Activated CD4-positive, alpha-beta memory T cell treated with anti-CD3 and anti-CD28 coated beads for 36 hours (primary cell): ENCODE measurements at regions of chr9 and their contacts with region 1.

Region 1: GRCh38 chr9:133023117-133023890 is 7.5 kb upstream of the GTF3C5 start:
- DNase-seq: peak; percentile 71
- H3K4me3 Mint-ChIP-seq: peak overlapping the region; percentile 8
- H3K27ac Mint-ChIP-seq: no peak overlapping the region
- H3K4me1 Mint-ChIP-seq: peaks cover 12% of the 10 kb centered on the region
- H3K27me3 Mint-ChIP-seq: no peaks in the 10 kb centered on the region

Region 2: DNA sequence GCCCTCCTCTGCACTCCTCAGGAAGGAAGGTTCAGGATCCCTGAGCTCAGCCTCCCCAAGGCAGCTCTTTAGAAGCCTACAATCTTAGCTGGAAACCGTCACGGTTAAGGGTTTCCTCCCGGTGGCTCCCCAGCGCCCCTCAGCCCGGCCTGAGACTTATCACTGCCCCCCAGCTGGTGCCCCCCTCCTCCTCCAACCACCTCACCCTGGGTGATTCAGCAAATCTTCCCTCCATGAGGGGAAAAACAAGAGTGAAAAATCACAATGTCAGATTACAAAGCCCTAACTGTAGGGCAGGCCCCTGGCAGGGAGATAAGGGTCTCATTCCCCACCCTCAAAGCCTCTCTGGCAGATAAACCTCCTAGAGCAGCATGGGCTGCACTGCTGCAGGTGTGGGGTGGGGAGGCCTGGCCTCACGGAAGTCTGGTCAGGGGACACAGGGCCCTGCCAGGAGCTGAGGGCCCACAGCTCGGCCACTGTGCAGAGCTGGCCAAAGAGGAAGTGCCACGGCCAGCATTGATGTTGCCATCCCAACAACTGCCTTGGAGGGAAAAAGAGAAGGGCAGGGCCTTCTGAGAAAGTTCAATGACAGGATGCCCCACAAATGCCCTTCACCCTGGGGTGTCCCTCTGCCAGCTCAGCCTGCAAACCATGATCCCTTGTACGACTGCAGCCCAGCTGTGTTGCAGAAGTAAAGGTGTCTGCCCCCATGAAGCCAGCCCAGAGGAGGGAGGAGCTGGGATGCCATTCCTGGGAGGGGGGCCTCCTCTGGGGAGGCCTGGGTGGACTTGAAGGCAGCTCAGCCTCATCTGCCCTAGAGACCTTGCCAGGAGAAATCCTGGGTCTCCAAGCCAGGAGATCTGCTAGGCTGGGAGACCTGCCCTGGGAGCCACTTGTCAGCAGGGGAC is 19.0 kb before region 1 on chr9:
- CTCF ChIA-PET with region 1: interaction called, 10 read pairs
- POLR2A ChIA-PET with region 1: no interaction called
- intact Hi-C with region 1: no loop called
- DNase-seq: no peak
- H3K4me3 Mint-ChIP-seq: no peak overlapping the region
- H3K27ac Mint-ChIP-seq: no peak overlapping the region
- H3K4me1 Mint-ChIP-seq: no peaks in the 10 kb centered on the region
- H3K27me3 Mint-ChIP-seq: peaks cover 59% of the 10 kb centered on the region

Region 3: DNA sequence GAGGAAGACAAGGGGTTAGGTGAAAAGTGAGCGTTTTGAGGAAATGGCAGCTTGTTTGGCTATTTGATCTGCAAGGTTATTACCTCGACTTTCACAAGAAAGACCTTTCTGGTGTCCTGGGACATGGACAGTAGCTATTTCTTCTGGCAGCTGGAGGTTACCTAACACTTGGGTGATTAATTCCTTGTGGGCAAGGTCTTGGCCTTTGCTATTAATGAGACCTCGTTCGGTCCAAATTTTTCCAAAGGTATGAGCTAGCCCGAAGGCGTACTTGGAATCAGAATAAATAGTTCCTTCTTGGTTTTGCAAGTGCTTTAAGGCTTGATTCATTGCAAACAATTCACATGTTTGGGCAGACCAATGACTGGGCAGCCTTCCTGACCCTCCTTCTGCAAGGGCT is 12.4 kb after region 1 on chr9:
- CTCF ChIA-PET with region 1: interaction called, 57 read pairs
- POLR2A ChIA-PET with region 1: interaction called, 4 read pairs
- intact Hi-C with region 1: loop called (anchors 1 kb)
- DNase-seq: no peak
- H3K4me3 Mint-ChIP-seq: no peak overlapping the region
- H3K27ac Mint-ChIP-seq: no peak overlapping the region
- H3K4me1 Mint-ChIP-seq: peaks cover 39% of the 10 kb centered on the region
- H3K27me3 Mint-ChIP-seq: no peaks in the 10 kb centered on the region

Region 4: DNA sequence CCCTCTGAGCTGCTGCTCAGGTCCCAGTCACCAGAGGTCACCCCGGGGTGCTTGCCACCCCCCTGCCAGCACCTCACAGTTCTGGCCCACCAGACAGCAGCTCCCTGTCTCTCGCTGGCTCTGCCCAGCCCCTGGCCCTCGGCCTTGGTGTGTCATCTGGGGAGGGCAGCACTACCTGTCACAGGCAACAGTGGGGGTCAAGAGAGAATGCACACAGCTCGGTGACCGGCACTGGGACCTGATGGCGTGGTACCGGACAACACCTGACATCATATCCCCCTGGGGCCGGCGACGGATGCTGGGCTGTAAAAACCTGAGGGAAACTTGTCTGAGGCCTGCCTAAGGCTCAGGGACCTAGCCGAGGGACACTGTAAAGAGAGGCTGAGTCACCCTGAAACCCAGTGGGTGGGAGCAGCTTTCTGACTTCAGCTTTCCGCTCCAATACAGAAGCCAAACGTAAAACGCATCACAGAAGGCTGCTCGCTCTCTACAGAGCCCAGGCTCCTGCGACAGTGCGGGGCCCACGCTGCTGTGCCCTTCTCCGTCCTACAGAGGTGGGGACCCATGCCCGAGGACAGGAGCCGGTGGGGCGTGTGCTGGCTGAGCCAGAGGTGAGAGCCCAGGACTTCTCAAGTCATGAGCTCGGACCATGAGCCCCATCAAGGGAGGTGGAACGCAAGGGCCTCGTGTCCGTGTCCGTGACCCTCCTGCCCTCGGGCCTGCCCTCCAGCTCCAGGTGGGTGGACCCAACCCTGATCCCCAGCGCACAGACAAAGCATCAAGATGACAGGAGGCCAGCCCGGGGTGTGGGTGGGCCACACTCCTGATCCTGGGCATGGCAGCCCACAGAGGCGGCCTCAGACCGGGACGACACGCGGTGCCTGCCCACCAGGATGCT is 92.4 kb after region 1 on chr9:
- CTCF ChIA-PET with region 1: interaction called, 12 read pairs
- POLR2A ChIA-PET with region 1: no interaction called
- intact Hi-C with region 1: no loop called
- DNase-seq: peak; percentile 89
- H3K4me3 Mint-ChIP-seq: peak overlapping the region; percentile 56
- H3K27ac Mint-ChIP-seq: peak overlapping the region; percentile 91
- H3K4me1 Mint-ChIP-seq: peaks cover 68% of the 10 kb centered on the region
- H3K27me3 Mint-ChIP-seq: no peaks in the 10 kb centered on the region

Region 5: DNA sequence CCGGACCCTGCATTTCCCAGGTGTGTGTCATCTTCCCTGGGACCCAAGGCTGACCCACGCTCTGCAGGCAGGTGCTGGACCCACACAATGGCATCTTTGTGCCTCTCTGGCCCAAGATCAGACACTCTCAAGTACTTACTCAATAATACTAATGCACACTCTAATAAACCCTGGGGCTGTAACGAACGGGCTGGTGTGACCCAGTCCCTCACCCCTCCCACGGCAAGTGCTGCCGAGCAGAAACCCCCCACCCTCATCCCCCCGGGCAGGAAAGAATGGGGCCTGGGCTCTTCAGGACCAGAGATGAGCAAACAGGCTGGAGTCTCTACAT is 186.9 kb after region 1 on chr9:
- CTCF ChIA-PET with region 1: no interaction called
- POLR2A ChIA-PET with region 1: no interaction called
- intact Hi-C with region 1: no loop called
- DNase-seq: no peak
- H3K4me3 Mint-ChIP-seq: no peak overlapping the region
- H3K27ac Mint-ChIP-seq: no peak overlapping the region
- H3K4me1 Mint-ChIP-seq: no peaks in the 10 kb centered on the region
- H3K27me3 Mint-ChIP-seq: peaks cover 18% of the 10 kb centered on the region

Region 6: GRCh38 chr9:133485361-133486260 is 462.3 kb after region 1 on chr9:
- CTCF ChIA-PET with region 1: interaction called, 7 read pairs
- POLR2A ChIA-PET with region 1: no interaction called
- intact Hi-C with region 1: loop called (anchors 10 kb)
- DNase-seq: no peak
- H3K4me3 Mint-ChIP-seq: no peak overlapping the region
- H3K27ac Mint-ChIP-seq: no peak overlapping the region
- H3K4me1 Mint-ChIP-seq: no peaks in the 10 kb centered on the region
- H3K27me3 Mint-ChIP-seq: peaks cover 14% of the 10 kb centered on the region